ENCODE measurements at regions of chr12 and their contacts with region 1.

Region 1: GRCh38 chr12:107105410-107105703 is 12.0 kb upstream of the CRY1 start:
- DNase-seq: no peak
- H3K4me3 ChIP-seq: no peak overlapping the region
- H3K27ac ChIP-seq: no peak overlapping the region
- H3K4me1 ChIP-seq: no peaks in the 10 kb centered on the region
- H3K27me3 ChIP-seq: no peaks in the 10 kb centered on the region; the same call in 1 of the 2 replicates
- CTCF ChIP-seq: no peak

Region 2: GRCh38 chr12:107014028-107014427 is 91.3 kb before region 1 on chr12:
- CTCF ChIA-PET with region 1: no interaction called
- POLR2A ChIA-PET with region 1: interaction called, 3 read pairs
- intact Hi-C with region 1: loop called (anchors 1 kb)
- DNase-seq: peak; percentile 37 to 85
- H3K4me3 ChIP-seq: no peak overlapping the region
- H3K27ac ChIP-seq: no peak overlapping the region
- H3K4me1 ChIP-seq: no peaks in the 10 kb centered on the region
- H3K27me3 ChIP-seq: no peaks in the 10 kb centered on the region
- CTCF ChIP-seq: peak; percentile 66

Region 3: GRCh38 chr12:107057071-107057818 is 48.1 kb before region 1 on chr12:
- CTCF ChIA-PET with region 1: no interaction called
- POLR2A ChIA-PET with region 1: no interaction called
- intact Hi-C with region 1: no loop called
- DNase-seq: peak; percentile 6 to 94
- H3K4me3 ChIP-seq: no peak overlapping the region
- H3K27ac ChIP-seq: peak overlapping the region; percentile 69
- H3K4me1 ChIP-seq: peaks cover 14% of the 10 kb centered on the region
- H3K27me3 ChIP-seq: no peaks in the 10 kb centered on the region
- CTCF ChIP-seq: peak; percentile 40; the same call in 1 of the 2 replicates

Region 4: GRCh38 chr12:107236824-107237511 is 131.6 kb after region 1 on chr12:
- CTCF ChIA-PET with region 1: no interaction called
- POLR2A ChIA-PET with region 1: no interaction called
- intact Hi-C with region 1: no loop called
- DNase-seq: peak in 1 of 2 experiments; percentile 61
- H3K4me3 ChIP-seq: no peak overlapping the region
- H3K27ac ChIP-seq: peak overlapping the region; percentile 31
- H3K4me1 ChIP-seq: peaks cover 24% of the 10 kb centered on the region
- H3K27me3 ChIP-seq: no peaks in the 10 kb centered on the region
- CTCF ChIP-seq: no peak

Measured in PC-9 (cell line).